ENCODE measurements at regions of chr2 and their contacts with region 1.

Region 1: DNA sequence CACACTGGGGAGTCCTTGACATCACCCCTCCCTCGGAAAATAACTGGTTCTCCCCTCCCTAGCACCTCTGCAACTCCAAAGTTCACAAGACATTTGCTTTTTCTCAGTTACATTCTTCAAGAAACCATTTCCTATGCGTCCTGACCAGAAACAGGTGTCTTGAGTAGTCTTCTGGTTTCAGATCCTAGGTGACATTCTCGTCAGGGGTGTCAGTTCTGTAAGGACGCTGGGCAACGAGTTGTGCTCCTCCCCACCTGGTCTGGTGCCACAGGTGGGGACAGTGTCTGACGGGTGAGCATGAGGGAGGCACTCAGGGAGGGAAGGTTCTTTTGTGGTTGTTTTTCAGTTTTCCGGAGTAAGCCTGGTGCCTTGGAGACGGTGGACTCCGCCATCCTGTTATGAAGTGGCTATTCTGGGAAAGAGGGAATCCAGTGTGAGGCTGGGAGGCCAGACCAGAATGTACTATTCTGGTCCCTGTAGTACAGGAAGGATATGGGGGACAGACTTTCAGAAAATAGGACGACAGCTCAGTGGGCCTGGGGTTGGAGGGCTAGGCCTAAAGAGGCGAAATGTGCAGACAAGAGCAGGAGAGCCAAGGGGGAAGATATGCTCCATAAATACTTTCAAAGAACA is 50.6 kb downstream of the EPAS1 start:
- DNase-seq: no peak
- H3K4me3 ChIP-seq: no peak overlapping the region
- H3K27ac ChIP-seq: peak overlapping the region in 3 of 8 donors; percentile 20 to 40 (median 25)
- H3K4me1 ChIP-seq: peaks cover 24 to 87% (median 51%) of the 10 kb centered on the region in 6 donors
- H3K27me3 ChIP-seq: no peaks in the 10 kb centered on the region
- CTCF ChIP-seq: no peak
- POLR2A ChIP-seq: no peak

Region 2: DNA sequence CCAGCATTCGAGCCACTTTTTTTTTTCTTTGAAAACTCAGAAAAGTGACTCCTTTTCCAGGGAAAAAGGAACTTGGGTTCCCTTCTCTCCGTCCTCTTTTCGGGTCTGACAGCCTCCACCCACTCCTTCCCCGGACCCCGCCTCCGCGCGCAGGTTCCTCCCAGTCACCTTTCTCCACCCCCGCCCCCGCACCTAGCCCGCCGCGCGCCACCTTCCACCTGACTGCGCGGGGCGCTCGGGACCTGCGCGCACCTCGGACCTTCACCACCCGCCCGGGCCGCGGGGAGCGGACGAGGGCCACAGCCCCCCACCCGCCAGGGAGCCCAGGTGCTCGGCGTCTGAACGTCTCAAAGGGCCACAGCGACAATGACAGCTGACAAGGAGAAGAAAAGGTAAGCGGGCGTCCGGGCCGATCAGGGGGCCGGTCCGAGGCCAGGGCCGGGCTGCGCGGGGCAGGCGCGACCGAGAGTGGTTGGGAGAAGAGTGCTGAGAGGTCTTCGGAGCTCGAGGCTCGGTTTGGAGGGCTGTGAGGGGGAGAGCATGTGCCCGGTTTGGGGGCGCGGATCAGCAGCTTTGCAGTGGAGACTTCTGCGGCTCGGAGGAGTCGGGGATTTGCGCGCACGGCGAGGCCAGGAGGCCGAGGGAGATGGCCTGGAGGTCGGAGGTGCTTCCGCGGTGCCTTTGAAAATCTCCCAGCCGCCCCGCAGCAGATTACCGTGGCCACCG is 50.1 kb before region 1 on chr2:
- intact Hi-C with region 1: loop called (anchors 2 kb)
- DNase-seq: peak; percentile 94
- H3K4me3 ChIP-seq: peak overlapping the region; percentile 53 to 93 (median 78)
- H3K27ac ChIP-seq: peak overlapping the region; percentile 81 to 96 (median 92)
- H3K4me1 ChIP-seq: peaks cover 5 to 67% (median 42%) of the 10 kb centered on the region in 6 donors
- H3K27me3 ChIP-seq: peaks cover 0 to 67% (median 27%) of the 10 kb centered on the region in 7 donors
- CTCF ChIP-seq: no peak
- POLR2A ChIP-seq: no peak

Region 3: GRCh38 chr2:47688561-47688960 is 1340.8 kb after region 1 on chr2:
- intact Hi-C with region 1: no loop called
- DNase-seq: no peak
- H3K4me3 ChIP-seq: no peak overlapping the region
- H3K27ac ChIP-seq: no peak overlapping the region
- H3K4me1 ChIP-seq: peaks cover 0 to 16% (median 4%) of the 10 kb centered on the region in 6 donors
- H3K27me3 ChIP-seq: peaks cover 0 to 5% (median 0%) of the 10 kb centered on the region in 7 donors
- CTCF ChIP-seq: no peak
- POLR2A ChIP-seq: no peak

Measured in spleen (tissue), 13 donors.